ENCODE measurements at regions of chr3 and their contacts with region 1.

Region 1: GRCh38 chr3:157174649-157175498 is 14.9 kb upstream of the CCNL1 start:
- DNase-seq: peak; percentile 98
- ATAC-seq: peak; percentile 95
- H3K4me3 ChIP-seq: peak overlapping the region; percentile 74 to 88 (median 74)
- H3K27ac ChIP-seq: peak overlapping the region; percentile 88
- H3K4me1 ChIP-seq: peaks cover 35% of the 10 kb centered on the region
- H3K27me3 ChIP-seq: no peaks in the 10 kb centered on the region; a peak in 1 of 5 replicates
- CTCF ChIP-seq: no peak; the same call in 1 of the 2 replicates
- EP300 ChIP-seq: peak; percentile 24 to 56; a peak in 3 of 4 replicates
- POLR2A ChIP-seq: peak; percentile 92 to 93
- RAD21 ChIP-seq: peak; percentile 37; the same call in 1 of the 2 replicates

Region 2: DNA sequence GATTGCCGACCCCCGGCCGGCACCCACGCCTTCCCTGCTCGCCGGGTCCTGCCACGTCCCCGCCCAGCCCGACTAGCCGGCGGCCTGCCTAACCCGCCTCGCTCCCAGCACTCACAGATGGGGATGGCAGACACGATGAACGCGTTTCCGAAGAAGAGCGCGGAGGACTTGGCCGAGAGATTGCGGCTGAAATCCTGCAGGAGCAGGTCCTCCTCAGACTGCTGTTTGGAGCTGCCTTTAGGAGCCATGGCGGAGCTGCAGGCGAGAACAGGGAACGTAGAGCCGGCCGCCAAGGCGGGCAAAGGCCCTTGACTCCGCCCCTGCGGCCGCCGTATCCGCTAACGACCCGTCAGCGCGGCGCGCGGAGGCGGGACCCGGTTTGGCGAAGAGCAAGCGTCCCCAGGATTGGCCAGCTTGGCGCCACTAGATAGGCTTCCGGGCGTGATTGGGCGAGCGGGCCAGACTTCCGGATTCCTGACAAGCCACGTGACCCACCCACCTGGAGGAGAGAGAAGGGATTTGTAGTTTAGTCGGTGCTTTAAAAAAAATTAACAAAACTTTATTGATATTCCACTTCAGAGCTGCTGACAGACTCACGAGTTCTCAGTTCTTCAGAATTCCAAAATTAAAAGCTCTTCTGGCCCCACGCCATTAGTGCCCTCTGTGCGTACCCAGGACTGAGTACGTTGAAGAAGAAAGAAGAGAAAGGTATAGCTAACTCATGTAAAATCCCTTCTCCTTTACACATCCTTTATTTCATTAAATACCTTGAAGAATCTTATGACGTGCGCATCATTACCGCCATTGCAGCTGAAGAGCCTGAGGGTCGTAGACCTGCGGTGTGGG is 619.8 kb before region 1 on chr3 and contains the start of gene SSR3:
- CTCF ChIA-PET with region 1: no interaction called
- POLR2A ChIA-PET with region 1: interaction called, 14 read pairs
- in situ Hi-C with region 1: no loop called
- intact Hi-C with region 1: no loop called
- DNase-seq: peak; percentile 96
- ATAC-seq: peak; percentile 99
- H3K4me3 ChIP-seq: peak within 1 kb of the TSS; percentile 85 to 100 (median 91)
- H3K27ac ChIP-seq: peak within 1 kb of the TSS; percentile 94
- H3K4me1 ChIP-seq: peaks cover 38% of the 10 kb centered on the region
- H3K27me3 ChIP-seq: no peaks in the 10 kb centered on the region; a peak in 2 of 5 replicates
- CTCF ChIP-seq: no peak
- EP300 ChIP-seq: peak in 1 of 2 experiments; percentile 35; a peak in 2 of 4 replicates
- POLR2A ChIP-seq: peak; percentile 88 to 98
- RAD21 ChIP-seq: no peak; the same call in 1 of the 2 replicates
- total RNA-seq, gene SSR3: 268 and 325 TPM in 2 replicates